Lower leg skin (tissue), 4 donors: ENCODE measurements at regions of chr22 and their contacts with region 1.

Region 1: DNA sequence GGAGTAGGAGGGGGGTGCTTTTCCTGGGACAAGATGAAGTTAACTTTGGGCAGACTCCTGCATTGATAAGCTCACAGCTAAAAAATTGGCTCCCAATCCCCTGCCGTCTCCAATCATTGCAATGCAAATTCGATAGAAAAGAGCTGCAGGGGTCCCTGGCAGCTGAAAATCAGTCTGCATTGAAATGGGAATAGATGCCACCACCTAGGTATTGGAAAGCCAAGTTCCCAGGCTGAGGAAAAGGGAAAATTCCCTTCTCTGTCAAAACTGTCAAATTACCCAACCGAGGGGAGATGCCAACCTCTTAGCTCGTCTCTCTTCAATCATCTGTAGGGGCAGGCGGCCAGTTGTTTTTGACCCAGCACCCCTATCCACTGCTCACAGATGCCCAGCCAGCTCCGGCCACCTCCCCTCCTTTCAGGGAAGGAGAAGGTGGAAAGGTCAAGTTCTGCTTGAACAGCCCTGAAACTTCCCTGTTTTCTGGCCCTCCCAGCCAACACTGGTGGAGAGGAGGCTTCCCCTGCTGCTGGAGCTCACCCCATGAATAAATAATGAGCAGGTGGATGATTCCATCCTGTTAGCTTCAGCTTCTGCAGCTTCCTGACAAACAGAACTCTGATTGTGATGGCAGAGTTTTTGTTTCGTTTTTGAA is 916.3 kb downstream of the TBC1D22A start:
- DNase-seq: no peak
- H3K4me3 ChIP-seq: no peak overlapping the region
- CTCF ChIP-seq: no peak
- POLR2A ChIP-seq: no peak

Region 2: GRCh38 chr22:47192651-47193490 is 485.9 kb before region 1 on chr22:
- intact Hi-C with region 1: no loop called
- DNase-seq: peak in 1 of 2 donors; percentile 83
- H3K4me3 ChIP-seq: no peak overlapping the region
- CTCF ChIP-seq: no peak
- POLR2A ChIP-seq: no peak

Region 3: GRCh38 chr22:47474464-47474863 is 204.3 kb before region 1 on chr22:
- intact Hi-C with region 1: no loop called
- DNase-seq: no peak
- H3K4me3 ChIP-seq: no peak overlapping the region
- CTCF ChIP-seq: no peak
- POLR2A ChIP-seq: no peak

Region 4: GRCh38 chr22:47783433-47784366 is 104.9 kb after region 1 on chr22:
- intact Hi-C with region 1: no loop called
- DNase-seq: peak in 1 of 2 donors; percentile 67
- H3K4me3 ChIP-seq: no peak overlapping the region
- CTCF ChIP-seq: no peak
- POLR2A ChIP-seq: no peak

Region 5: GRCh38 chr22:47802446-47802845 is 123.7 kb after region 1 on chr22:
- intact Hi-C with region 1: loop called (anchors 10 kb)
- DNase-seq: peak in 1 of 2 donors; percentile 76
- H3K4me3 ChIP-seq: no peak overlapping the region
- CTCF ChIP-seq: no peak
- POLR2A ChIP-seq: no peak

Region 6: DNA sequence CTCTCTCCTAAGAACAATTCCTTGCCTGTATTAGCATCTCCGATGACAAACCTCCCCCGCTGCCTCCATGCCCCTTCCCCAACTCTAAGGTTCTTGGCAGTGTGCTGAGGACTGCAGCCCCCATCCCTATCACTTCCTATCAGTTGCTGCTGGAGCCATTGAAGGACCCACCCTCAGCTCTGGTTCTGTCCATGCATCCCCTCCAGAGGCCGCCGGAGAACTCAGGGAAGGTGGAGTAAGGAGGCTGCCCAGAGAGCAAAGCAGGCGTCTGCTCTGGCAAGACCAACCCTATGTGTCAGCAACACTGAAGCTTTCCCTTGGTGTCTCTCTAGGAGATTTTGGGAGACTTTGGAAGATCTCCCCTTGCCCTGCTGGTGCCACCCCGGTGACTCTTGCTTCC is 223.1 kb after region 1 on chr22:
- intact Hi-C with region 1: no loop called
- DNase-seq: peak in 1 of 2 donors; percentile 15
- H3K4me3 ChIP-seq: no peak overlapping the region
- CTCF ChIP-seq: no peak
- POLR2A ChIP-seq: no peak

Region 7: DNA sequence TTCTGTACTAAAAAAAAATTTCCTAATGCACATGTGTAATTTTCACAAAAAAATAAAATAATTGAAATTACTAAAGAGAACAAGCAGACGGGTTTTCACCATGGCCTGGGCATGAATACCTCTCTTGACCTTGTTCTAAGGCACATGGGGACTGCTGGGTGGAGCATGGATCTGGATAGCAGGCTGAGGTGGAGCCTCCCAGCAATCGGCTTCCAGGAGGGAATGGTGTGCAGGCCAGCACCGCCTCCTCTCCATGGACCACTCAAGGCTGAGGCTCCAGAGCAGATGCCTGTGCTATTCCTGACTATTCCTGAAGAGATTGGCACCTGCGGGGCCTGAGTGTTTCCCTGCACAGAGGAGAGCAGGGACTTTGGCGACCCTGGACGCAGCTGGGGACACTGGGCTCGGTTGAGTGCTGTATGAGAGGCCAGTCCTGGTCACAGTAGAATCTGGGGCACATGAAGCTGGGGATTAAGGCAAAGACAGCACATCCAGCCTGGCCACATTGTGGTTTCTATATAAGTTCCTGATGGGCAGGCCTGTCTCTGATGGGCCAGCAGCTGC is 1185.3 kb after region 1 on chr22:
- intact Hi-C with region 1: loop called (anchors 5 kb)
- DNase-seq: no peak
- H3K4me3 ChIP-seq: no peak overlapping the region
- CTCF ChIP-seq: no peak
- POLR2A ChIP-seq: no peak